ENCODE measurements at regions of chr4 and their contacts with region 1.

Region 1: DNA sequence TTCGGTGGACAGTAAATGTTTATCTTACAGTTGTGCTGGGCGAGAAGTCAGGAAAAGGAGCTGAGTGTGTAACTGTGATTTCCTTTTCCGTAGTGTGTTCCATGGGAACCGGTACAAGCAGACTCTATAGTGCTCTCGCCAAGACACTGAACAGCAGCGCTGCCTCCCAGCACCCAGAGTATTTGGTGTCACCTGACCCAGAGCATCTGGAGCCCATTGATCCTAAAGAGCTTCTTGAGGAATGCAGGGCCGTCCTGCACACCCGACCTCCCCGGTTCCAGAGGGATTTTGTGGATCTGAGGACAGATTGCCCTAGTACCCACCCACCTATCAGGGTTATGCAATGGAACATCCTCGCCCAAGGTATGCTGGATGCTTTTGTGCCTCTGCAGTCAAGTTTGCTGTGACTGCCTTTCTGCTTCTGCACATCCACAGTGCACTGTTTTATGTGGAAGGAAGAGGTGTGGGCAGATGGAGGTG is 27.4 kb downstream of the NOCT start:
- DNase-seq: no peak
- H3K4me3 ChIP-seq: no peak overlapping the region
- H3K4me3 Mint-ChIP-seq: no peak overlapping the region
- H3K27ac ChIP-seq: no peak overlapping the region
- H3K27ac Mint-ChIP-seq: peak overlapping the region in 4 of 7 donors; percentile 35 to 70 (median 46)
- H3K4me1 ChIP-seq: no peaks in the 10 kb centered on the region
- H3K4me1 Mint-ChIP-seq: peaks cover 4 to 15% (median 8%) of the 10 kb centered on the region in 4 donors
- H3K27me3 ChIP-seq: no peaks in the 10 kb centered on the region
- H3K27me3 Mint-ChIP-seq: no peaks in the 10 kb centered on the region

Region 2: DNA sequence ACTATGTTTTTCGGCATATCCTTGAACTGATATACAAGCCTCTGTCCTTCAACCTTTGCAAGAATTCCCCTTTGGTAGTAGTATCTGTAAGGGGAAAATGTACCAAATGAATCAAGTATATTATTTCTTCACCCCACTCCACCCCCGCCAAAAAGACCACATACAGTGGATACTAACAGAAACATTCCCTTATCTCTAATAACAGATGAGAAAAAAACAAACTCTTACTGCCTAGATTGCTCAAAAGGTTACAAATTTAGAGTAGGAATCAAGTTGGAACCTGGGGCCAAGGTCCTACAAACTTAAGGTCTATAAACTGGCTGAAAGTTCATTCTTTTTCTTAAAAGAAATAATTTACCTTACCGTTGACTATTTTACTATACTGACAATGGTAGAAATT is 17.6 kb after region 1 on chr4:
- CTCF ChIA-PET with region 1: interaction called, 3 read pairs
- POLR2A ChIA-PET with region 1: interaction called, 3 read pairs
- intact Hi-C with region 1: loop called (anchors 1 kb)
- DNase-seq: no peak
- H3K4me3 ChIP-seq: no peak overlapping the region
- H3K4me3 Mint-ChIP-seq: no peak overlapping the region
- H3K27ac ChIP-seq: no peak overlapping the region
- H3K27ac Mint-ChIP-seq: peak overlapping the region in 4 of 7 donors; percentile 6 to 37 (median 22)
- H3K4me1 ChIP-seq: peaks cover 6% of the 10 kb centered on the region
- H3K4me1 Mint-ChIP-seq: peaks cover 15 to 34% (median 21%) of the 10 kb centered on the region in 4 donors
- H3K27me3 ChIP-seq: no peaks in the 10 kb centered on the region
- H3K27me3 Mint-ChIP-seq: no peaks in the 10 kb centered on the region

Region 3: GRCh38 chr4:139115226-139115625 is 72.2 kb after region 1 on chr4:
- CTCF ChIA-PET with region 1: no interaction called
- POLR2A ChIA-PET with region 1: no interaction called
- intact Hi-C with region 1: no loop called
- DNase-seq: no peak
- H3K4me3 ChIP-seq: no peak overlapping the region
- H3K4me3 Mint-ChIP-seq: no peak overlapping the region
- H3K27ac ChIP-seq: no peak overlapping the region
- H3K27ac Mint-ChIP-seq: no peak overlapping the region
- H3K4me1 ChIP-seq: no peaks in the 10 kb centered on the region
- H3K4me1 Mint-ChIP-seq: no peaks in the 10 kb centered on the region
- H3K27me3 ChIP-seq: no peaks in the 10 kb centered on the region
- H3K27me3 Mint-ChIP-seq: no peaks in the 10 kb centered on the region

Region 4: DNA sequence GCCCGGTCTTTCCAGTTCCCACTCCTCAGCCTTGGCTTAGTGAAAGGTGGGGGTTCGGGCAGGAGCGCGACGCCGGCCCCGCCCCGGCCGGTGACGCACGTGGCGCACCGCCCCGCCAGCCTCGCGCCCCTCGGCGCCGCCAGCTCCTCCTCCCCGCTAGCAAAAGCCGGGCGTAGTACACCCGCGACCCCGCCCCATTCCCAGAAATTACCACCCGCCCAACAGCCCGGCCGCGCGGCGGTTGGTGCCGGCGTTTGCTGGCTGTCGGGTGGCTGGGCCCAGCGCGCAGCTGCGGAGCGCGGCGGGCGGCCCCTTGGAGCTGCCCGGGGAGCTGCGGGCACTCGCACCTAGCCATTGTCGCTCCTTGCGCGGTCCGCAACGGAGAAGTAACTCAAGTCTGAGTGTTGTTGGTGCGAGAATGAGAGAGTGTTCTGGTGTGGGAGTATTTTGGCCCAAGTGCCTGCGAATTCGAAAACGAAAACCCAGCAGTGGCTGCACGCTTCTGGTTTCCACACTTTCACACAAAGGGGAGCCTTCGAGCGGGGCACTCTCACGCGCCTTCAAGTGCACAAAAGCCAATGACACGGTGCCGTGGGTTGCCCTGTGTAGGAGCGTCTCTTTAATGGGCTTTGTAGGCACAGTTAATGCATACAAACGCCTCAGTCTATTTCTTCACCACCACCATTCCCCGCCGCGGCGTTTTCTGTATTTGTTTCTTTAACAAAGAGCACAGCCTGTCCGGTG is 135.0 kb after region 1 on chr4:
- CTCF ChIA-PET with region 1: no interaction called
- POLR2A ChIA-PET with region 1: no interaction called
- intact Hi-C with region 1: no loop called
- DNase-seq: peak; percentile 92 to 94 (median 92)
- H3K4me3 ChIP-seq: peak overlapping the region; percentile 88 to 89
- H3K4me3 Mint-ChIP-seq: peak overlapping the region; percentile 89 to 94 (median 92)
- H3K27ac ChIP-seq: peak overlapping the region; percentile 96
- H3K27ac Mint-ChIP-seq: peak overlapping the region; percentile 92 to 97 (median 96)
- H3K4me1 ChIP-seq: peaks cover 17% of the 10 kb centered on the region
- H3K4me1 Mint-ChIP-seq: peaks cover 14 to 29% (median 18%) of the 10 kb centered on the region in 4 donors
- H3K27me3 ChIP-seq: no peaks in the 10 kb centered on the region
- H3K27me3 Mint-ChIP-seq: no peaks in the 10 kb centered on the region

Measured in CD4-positive, alpha-beta memory T cell (primary cell).